ENCODE measurements at regions of chr1 and their contacts with region 1.

Region 1: GRCh38 chr1:48061162-48062136 is 64.3 kb upstream of the TRABD2B start:
- DNase-seq: peak; percentile 62
- H3K4me3 Mint-ChIP-seq: no peak overlapping the region
- H3K27ac Mint-ChIP-seq: no peak overlapping the region
- H3K4me1 Mint-ChIP-seq: peaks cover 19% of the 10 kb centered on the region
- H3K27me3 Mint-ChIP-seq: peaks cover 32% of the 10 kb centered on the region
- CTCF ChIP-seq: no peak

Region 2: DNA sequence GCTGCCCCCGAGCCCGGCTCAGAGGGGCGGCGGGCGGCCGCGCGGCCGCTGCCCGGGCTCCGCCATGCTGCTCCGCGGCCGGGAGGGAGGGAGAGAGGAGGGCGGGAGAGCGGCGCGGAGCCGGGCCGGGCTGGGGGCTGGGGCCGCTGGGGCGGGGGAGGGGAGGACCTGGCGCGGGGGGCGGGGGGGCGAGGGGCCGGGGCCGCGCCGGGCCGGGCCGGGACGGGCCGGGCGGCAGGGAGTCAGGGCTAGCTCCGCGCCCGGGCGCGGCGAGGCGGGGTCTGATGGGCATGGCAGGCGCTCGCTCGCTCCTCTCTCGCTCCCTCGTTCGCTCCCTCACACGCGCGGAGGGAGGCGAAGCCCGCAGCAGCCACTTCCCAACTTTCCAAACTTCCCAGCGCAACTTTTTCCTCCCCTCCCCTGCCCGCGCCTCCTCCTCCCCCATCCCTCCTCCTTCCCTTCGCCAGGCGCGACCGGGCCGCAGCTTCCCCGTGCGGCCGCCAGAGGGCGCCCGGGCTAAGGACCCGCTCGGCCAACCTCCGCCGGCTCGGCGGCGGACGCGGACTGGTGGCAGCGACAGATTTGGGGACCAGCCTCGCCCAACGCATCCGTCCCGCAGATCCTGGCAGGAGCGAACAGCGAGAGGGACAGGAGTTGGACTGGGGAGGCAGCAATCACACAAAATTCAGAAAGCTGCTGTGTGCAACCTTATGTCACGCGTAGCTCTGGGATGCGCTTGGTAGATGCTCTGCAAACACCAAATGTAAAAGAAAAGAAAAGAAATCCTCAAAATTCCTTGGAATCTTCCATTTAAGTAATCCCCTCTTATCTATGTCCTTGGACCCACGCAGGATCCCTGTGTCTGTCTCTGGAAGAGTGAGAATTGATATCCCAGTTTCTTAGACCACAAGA is 63.9 kb before region 1 on chr1 and contains the start of gene TRABD2B:
- CTCF ChIA-PET with region 1: interaction called, 25 read pairs
- intact Hi-C with region 1: loop called (anchors 5 kb)
- DNase-seq: peak; percentile 85
- H3K4me3 Mint-ChIP-seq: peak within 1 kb of the TSS; percentile 72
- H3K27ac Mint-ChIP-seq: peak within 1 kb of the TSS; percentile 67
- H3K4me1 Mint-ChIP-seq: peaks cover 11% of the 10 kb centered on the region
- H3K27me3 Mint-ChIP-seq: peaks cover 56% of the 10 kb centered on the region
- CTCF ChIP-seq: peak; percentile 90
- total RNA-seq, gene TRABD2B: 0.10 and 0.42 TPM in 2 replicates